H1 (cell line): ENCODE measurements at regions of chr2 and their contacts with region 1.

Region 1: DNA sequence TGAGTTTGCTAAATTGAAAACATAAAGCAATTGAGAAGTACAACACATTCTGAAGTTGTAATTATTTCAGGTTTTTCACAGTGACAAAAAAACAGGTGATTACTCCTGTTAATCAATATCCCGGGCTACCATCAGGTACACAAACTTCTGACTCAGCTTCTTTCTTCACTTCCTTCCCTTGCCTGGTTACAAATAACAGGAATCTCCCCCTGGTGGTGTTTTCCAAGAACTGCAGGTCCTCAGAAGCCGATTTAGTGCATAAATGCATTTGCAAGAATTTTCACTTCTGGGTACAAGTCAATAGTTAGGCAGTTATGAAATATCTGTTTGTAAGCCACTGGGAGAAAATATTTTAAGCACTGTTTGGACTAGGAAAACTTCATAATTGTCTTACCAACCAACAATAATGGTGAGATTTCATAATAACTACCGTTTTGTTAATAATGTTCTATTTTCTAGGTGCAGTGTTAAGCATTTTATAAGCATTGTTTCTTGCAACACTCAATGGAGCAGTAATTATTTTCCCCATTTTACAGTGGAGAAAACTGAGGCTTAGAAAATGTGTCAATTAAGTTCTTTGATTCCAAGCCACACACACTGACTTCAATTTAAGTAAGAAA is 12.4 kb upstream of the GMCL1 start:
- DNase-seq: peak; percentile 60 to 68
- H3K4me3 ChIP-seq: no peak overlapping the region
- H3K27ac ChIP-seq: no peak overlapping the region
- H3K4me1 ChIP-seq: peaks cover 0 to 9% (median 0%) of the 10 kb centered on the region in 4 experiments; a peak in 3 of 7 replicates
- H3K27me3 ChIP-seq: no peaks in the 10 kb centered on the region
- CTCF ChIP-seq: peak in 2 of 3 experiments; percentile 79 to 82; a peak in 3 of 4 replicates
- EP300 ChIP-seq: no peak
- POLR2A ChIP-seq: no peak
- RAD21 ChIP-seq: peak; percentile 73 to 86

Region 2: GRCh38 chr2:69717861-69718273 is 99.2 kb before region 1 on chr2:
- CTCF ChIA-PET with region 1: interaction called, 319 read pairs
- POLR2A ChIA-PET with region 1: no interaction called
- DNase-seq: peak in 1 of 2 experiments; percentile 79
- H3K4me3 ChIP-seq: peak overlapping the region in 2 of 4 experiments; percentile 3 to 31; a peak in 3 of 8 replicates
- H3K27ac ChIP-seq: peak overlapping the region; percentile 71; the same call in 1 of the 2 replicates
- H3K4me1 ChIP-seq: peaks cover 13 to 28% (median 22%) of the 10 kb centered on the region in 4 experiments; a peak in 6 of 7 replicates
- H3K27me3 ChIP-seq: no peaks in the 10 kb centered on the region
- CTCF ChIP-seq: 0 out of 4 replicates have a peak, but pooled peaks of 1 of the 3 experiments have one; percentile 0
- EP300 ChIP-seq: peak in 1 of 2 experiments; percentile 91; a peak in 1 of 3 replicates
- POLR2A ChIP-seq: no peak
- RAD21 ChIP-seq: 0 out of 4 replicates have a peak, but pooled peaks of 1 of the 2 experiments have one; percentile 5

Region 3: GRCh38 chr2:69734035-69734631 is 82.9 kb before region 1 on chr2:
- CTCF ChIA-PET with region 1: interaction called, 19 read pairs
- POLR2A ChIA-PET with region 1: no interaction called
- DNase-seq: no peak
- H3K4me3 ChIP-seq: no peak overlapping the region
- H3K27ac ChIP-seq: no peak overlapping the region
- H3K4me1 ChIP-seq: no peaks in the 10 kb centered on the region
- H3K27me3 ChIP-seq: no peaks in the 10 kb centered on the region
- CTCF ChIP-seq: no peak
- EP300 ChIP-seq: no peak
- POLR2A ChIP-seq: no peak
- RAD21 ChIP-seq: no peak

Region 4: DNA sequence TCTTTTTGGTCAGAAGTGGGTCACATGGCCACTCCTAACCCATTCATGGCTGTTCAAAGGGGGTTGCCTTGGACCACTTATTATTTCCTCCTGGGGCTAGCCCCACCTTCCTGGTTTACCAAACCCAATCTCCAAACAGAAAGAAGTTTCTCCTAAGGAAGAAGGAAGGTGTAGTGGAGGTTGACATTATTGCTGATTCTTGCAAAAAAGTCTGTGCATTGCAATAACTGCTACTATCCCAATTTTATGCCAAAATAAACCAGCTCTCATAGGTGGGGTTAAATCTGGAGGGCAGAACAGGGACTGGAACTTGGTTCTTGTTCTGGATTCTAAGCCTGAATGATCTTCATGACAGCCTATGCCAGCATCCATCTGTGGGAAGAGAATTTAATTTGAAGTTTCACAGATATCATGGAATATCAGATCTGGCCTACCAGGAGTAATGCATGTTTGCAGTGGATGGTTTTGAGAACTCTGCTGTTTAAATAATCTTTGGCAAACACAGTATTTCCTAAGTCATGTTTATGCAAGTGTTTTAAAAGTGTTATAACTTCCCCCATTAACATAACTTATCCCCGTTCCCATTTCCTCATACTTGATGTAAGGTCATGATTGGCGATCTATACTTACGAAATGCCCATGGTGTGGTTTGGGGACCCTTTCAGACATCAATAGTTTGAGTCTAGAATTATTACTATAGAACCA is 63.2 kb before region 1 on chr2:
- CTCF ChIA-PET with region 1: interaction called, 11 read pairs
- POLR2A ChIA-PET with region 1: no interaction called
- DNase-seq: no peak
- H3K4me3 ChIP-seq: no peak overlapping the region
- H3K27ac ChIP-seq: no peak overlapping the region
- H3K4me1 ChIP-seq: no peaks in the 10 kb centered on the region
- H3K27me3 ChIP-seq: no peaks in the 10 kb centered on the region
- CTCF ChIP-seq: no peak
- EP300 ChIP-seq: no peak
- POLR2A ChIP-seq: no peak
- RAD21 ChIP-seq: no peak

Region 5: GRCh38 chr2:69798909-69799526 is 18.0 kb before region 1 on chr2:
- CTCF ChIA-PET with region 1: interaction called, 29 read pairs
- POLR2A ChIA-PET with region 1: no interaction called
- DNase-seq: no peak
- H3K4me3 ChIP-seq: no peak overlapping the region
- H3K27ac ChIP-seq: no peak overlapping the region
- H3K4me1 ChIP-seq: peaks cover 0 to 16% (median 4%) of the 10 kb centered on the region in 4 experiments; a peak in 5 of 7 replicates
- H3K27me3 ChIP-seq: no peaks in the 10 kb centered on the region
- CTCF ChIP-seq: no peak
- EP300 ChIP-seq: no peak
- POLR2A ChIP-seq: no peak
- RAD21 ChIP-seq: no peak

Region 6: GRCh38 chr2:69829256-69830046 is 12.4 kb after region 1 on chr2 and contains the start of gene GMCL1:
- CTCF ChIA-PET with region 1: interaction called, 20 read pairs
- POLR2A ChIA-PET with region 1: interaction called, 5 read pairs
- DNase-seq: peak; percentile 96 to 99
- H3K4me3 ChIP-seq: peak within 1 kb of the TSS; percentile 70 to 77 (median 72)
- H3K27ac ChIP-seq: peak within 1 kb of the TSS; percentile 89
- H3K4me1 ChIP-seq: peaks cover 0 to 5% (median 4%) of the 10 kb centered on the region in 4 experiments; a peak in 3 of 7 replicates
- H3K27me3 ChIP-seq: no peaks in the 10 kb centered on the region
- CTCF ChIP-seq: no peak
- EP300 ChIP-seq: no peak
- POLR2A ChIP-seq: peak; percentile 85 to 91
- RAD21 ChIP-seq: no peak
- total RNA-seq, gene GMCL1: 21.9 and 26.1 TPM in 2 replicates

Region 7: DNA sequence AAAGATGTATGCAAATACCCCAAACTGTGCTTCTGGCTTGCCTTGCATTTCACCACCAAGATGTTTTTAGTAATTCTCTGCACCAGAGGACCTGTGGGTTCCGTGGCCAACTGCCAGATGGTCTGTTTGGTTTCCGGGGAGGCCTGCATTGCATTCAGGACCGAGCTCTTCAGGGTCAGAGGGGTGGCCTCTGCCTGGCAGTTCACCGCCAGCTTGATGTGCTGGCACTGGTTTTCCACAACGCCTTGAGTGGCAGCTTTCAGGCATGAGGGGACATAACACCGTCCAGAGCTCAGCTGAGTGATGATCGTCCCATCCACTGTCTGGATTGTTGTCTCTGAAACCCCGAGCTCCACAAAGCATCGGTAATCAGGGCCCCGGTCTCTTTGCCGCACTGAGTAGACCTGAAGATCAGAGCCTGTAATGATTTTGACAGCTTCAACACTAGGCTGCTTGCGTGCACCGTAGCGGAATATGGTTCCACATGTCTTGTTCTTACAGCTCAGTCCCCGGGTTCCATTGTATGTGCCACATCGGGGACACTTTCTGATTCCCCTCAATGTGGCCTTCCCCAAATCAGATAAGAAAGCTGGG is 364.4 kb after region 1 on chr2:
- CTCF ChIA-PET with region 1: no interaction called
- POLR2A ChIA-PET with region 1: no interaction called
- DNase-seq: no peak
- H3K4me3 ChIP-seq: no peak overlapping the region
- H3K27ac ChIP-seq: no peak overlapping the region
- H3K4me1 ChIP-seq: no peaks in the 10 kb centered on the region
- H3K27me3 ChIP-seq: no peaks in the 10 kb centered on the region
- CTCF ChIP-seq: no peak
- EP300 ChIP-seq: no peak
- POLR2A ChIP-seq: no peak
- RAD21 ChIP-seq: no peak